ENCODE measurements at regions of chrX and their contacts with region 1.

Region 1: DNA sequence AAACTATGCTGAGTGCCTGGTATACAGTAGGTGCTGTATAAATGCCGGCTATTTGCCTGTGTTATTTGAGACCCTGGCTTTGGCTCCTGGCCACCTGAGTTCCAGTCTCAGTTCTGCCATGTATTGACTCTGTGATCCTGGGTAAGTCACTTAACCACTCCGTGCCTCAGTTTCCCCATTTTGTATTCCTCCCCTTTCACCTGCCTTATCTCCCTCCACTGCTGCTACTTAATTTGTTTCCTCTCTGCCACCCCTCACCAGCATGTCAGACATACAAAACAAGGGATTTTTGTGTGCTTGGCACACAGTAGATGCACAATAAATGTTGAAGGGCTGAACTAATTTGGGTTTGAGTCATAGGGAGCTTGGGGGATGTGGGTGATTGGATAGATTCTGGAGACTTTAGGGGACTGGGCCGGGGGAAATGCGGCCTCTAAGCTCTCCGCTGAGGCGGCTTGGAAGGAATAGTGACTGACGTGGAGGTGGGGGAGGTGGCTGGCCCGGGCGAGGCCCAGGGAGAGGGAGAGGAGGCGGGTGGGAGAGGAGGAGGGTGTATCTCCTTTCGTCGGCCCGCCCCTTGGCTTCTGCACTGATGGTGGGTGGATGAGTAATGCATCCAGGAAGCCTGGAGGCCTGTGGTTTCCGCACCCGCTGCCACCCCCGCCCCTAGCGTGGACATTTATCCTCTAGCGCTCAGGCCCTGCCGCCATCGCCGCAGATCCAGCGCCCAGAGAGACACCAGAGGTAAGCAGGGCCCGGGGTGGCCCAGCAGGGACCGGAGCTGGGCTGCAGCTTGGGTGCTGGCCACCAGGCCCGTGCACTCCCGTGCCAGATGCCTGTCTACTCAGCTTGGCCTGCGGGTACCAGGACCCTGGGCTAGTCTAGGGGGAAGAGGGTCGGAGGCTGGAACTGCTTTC is at the start of gene TIMP1:
- DNase-seq: peak; percentile 93
- H3K4me3 Mint-ChIP-seq: peak within 1 kb of the TSS; percentile 76
- H3K27ac Mint-ChIP-seq: peak within 1 kb of the TSS; percentile 74
- H3K4me1 Mint-ChIP-seq: peaks cover 24% of the 10 kb centered on the region
- H3K27me3 Mint-ChIP-seq: no peaks in the 10 kb centered on the region
- CTCF ChIP-seq: no peak
- total RNA-seq, gene TIMP1: 647 and 720 TPM in 2 replicates

Region 2: DNA sequence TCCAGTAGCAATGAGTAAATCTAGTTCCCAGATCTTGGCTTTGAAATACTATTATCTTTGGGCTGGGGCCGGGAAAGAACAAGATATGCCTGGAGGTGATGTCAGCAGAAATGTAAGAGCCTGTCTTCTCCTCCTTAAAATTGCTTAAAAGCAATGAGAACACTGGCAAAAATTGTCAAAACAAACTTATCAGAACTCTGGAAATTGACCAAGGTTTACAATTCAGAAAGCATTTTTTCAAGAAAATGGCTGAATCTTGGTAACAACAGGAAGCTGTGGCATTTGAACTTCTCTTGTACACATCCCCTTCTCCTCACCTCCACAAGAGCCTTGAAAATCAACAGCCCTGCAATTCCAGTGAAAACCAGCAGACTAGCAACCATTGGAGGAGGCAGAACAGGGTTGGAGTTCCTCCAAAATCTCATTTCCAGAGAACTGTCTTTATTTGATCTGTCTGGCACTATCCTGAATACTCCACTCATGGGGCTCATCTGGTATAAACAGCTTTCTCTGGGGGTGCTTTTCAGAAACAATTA is 13.8 kb after region 1 on chrX:
- CTCF ChIA-PET with region 1: interaction called, 4 read pairs
- POLR2A ChIA-PET with region 1: interaction called, 21 read pairs
- intact Hi-C with region 1: no loop called
- DNase-seq: peak; percentile 70
- H3K4me3 Mint-ChIP-seq: no peak overlapping the region
- H3K27ac Mint-ChIP-seq: peak overlapping the region; percentile 59
- H3K4me1 Mint-ChIP-seq: peaks cover 4% of the 10 kb centered on the region
- H3K27me3 Mint-ChIP-seq: no peaks in the 10 kb centered on the region
- CTCF ChIP-seq: no peak

Measured in MCF 10A (cell line).